Common myeloid progenitor, CD34-positive (primary cell): ENCODE measurements at regions of chr11 and their contacts with region 1.

Region 1: DNA sequence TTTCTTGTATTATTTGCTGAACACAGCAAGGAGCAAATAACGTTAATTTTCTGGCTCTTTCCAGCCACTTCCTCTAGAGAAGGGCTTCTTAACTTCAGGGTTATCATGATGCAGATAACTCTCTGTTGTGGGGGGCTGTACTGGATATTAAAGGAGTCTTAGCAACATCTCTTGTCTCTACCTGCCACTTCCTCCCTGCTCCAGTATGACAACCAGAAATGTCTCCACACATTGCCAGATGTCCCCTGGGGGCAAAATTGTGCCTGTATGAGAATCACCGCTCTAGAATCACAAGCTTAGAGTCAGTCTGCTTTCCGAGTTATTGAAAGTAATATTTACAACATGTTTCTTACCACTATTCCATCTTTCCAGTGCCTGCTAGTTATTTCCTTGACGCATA is 6.8 kb downstream of the JRKL start:
- DNase-seq: peak in 1 of 3 donors; percentile 13
- H3K4me3 ChIP-seq: no peak overlapping the region
- H3K27ac ChIP-seq: no peak overlapping the region
- H3K4me1 ChIP-seq: no peaks in the 10 kb centered on the region
- H3K27me3 ChIP-seq: no peaks in the 10 kb centered on the region

Region 2: GRCh38 chr11:96054870-96055705 is 341.5 kb before region 1 on chr11:
- CTCF ChIA-PET with region 1: interaction called, 10 read pairs
- POLR2A ChIA-PET with region 1: no interaction called
- DNase-seq: peak; percentile 38 to 52 (median 51)
- H3K4me3 ChIP-seq: no peak overlapping the region
- H3K27ac ChIP-seq: no peak overlapping the region
- H3K4me1 ChIP-seq: peaks cover 0 to 2% (median 0%) of the 10 kb centered on the region in 4 experiments
- H3K27me3 ChIP-seq: no peaks in the 10 kb centered on the region

Region 3: DNA sequence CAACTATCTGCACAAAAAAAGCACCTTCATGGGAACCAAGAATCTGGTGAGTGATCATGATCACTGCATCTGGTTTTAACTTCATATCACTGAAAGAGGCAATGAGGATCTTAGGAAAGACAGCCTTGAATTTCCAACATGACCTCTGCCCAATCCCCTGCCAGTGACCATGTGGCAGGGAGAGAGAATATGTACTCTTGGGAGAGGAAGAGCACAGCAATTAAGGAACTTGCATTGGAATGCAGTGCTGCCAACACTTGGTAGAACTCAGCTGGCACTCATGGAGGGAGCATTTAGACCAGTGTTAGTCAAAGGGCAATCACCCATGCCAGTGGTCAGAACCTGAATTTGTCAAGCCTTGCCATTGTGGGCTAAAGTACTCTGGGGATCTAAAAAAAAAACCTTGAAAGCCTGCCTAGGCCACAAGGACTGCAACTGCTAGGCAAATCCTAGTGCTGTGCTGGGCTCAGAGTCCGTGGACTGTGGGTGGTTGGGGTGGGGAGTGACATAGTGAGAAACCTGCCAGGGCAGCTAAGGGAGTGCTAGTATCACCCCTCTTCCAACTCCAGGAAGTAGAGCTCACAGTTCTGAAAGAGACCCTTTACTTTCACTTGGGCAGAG is 16.2 kb after region 1 on chr11:
- CTCF ChIA-PET with region 1: no interaction called
- POLR2A ChIA-PET with region 1: no interaction called
- DNase-seq: no peak
- H3K4me3 ChIP-seq: no peak overlapping the region
- H3K27ac ChIP-seq: no peak overlapping the region
- H3K4me1 ChIP-seq: no peaks in the 10 kb centered on the region
- H3K27me3 ChIP-seq: no peaks in the 10 kb centered on the region